ENCODE measurements at regions of chr6 and their contacts with region 1.

Region 1: DNA sequence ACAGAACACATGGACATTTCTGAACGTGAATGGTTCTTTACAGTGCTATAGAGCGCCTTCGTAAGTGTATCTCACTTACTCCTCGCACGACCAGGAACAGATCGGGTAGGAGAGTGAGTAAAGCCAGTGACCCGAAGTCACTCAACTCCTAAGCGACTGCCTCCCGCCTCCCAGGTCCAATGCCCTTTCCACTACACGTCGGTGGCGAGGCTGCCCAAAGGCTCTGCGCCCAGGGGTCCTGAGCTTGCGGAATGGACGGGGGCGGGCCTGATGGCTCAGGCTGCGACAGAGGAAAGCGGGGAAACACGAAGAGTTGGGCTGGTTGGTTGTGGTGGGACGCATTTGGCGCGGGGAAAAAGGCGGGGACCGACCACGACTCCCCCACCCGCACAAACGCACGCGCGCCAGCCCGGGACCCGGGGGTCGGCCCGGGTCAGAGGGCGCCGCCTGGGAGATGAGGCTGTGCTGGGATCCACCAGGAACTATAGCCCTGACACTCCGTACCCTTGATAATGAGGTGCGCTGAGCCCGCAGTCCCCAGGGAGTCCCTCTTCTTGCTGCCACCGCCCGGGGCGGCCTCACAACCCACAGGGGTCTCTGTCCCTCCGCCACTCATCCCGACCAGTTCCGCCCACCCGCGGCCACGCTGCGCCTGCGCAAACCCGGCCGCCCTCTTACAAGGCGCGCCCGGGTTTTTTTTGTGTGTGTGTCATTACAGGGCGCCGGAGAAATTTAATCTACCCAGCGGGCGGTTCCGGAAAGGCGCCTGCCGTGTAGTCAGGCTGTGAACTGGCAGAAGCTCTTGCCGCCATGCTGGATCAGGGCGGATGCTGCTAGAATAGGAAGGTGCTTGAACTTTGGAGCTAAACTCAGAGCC is at the start of gene BLOC1S5:
- DNase-seq: peak; percentile 97
- ATAC-seq: peak; percentile 90
- H3K4me3 ChIP-seq: peak within 1 kb of the TSS; percentile 78 to 96 (median 85)
- H3K4me3 Mint-ChIP-seq: peak within 1 kb of the TSS; percentile 98
- H3K27ac ChIP-seq: peak within 1 kb of the TSS; percentile 85 to 86
- H3K27ac Mint-ChIP-seq: peak within 1 kb of the TSS; percentile 94
- H3K4me1 ChIP-seq: peaks cover 7 to 15% of the 10 kb centered on the region in 2 donors
- H3K4me1 Mint-ChIP-seq: peaks cover 20% of the 10 kb centered on the region
- H3K27me3 ChIP-seq: no peaks in the 10 kb centered on the region
- H3K27me3 Mint-ChIP-seq: no peaks in the 10 kb centered on the region
- CTCF ChIP-seq: no peak
- total RNA-seq, gene BLOC1S5: 16.0 and 18.8 TPM in 2 replicates

Region 2: DNA sequence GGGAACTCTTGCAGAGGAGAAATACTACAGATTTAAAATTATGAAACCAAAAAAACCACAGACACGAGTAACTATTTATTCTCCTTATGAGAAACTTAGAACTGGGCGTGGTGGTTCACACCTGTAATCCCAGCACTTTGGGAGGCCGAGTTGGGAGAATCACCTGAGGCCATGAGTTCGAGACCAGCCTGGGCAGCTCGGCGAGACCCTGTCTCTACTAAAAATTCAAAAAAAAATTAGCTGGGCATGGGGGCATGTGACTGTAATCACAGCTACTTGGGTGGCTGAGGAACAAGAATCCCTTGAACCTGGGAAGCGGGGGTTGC is 787.8 kb before region 1 on chr6:
- CTCF ChIA-PET with region 1: interaction called, 9 read pairs
- POLR2A ChIA-PET with region 1: no interaction called
- intact Hi-C with region 1: loop called (anchors 1 kb)
- DNase-seq: no peak
- ATAC-seq: no peak
- H3K4me3 ChIP-seq: no peak overlapping the region
- H3K4me3 Mint-ChIP-seq: peak overlapping the region; percentile 64
- H3K27ac ChIP-seq: no peak overlapping the region
- H3K27ac Mint-ChIP-seq: peak overlapping the region; percentile 81
- H3K4me1 ChIP-seq: peaks cover 29 to 36% of the 10 kb centered on the region in 2 donors
- H3K4me1 Mint-ChIP-seq: peaks cover 28% of the 10 kb centered on the region
- H3K27me3 ChIP-seq: no peaks in the 10 kb centered on the region
- H3K27me3 Mint-ChIP-seq: no peaks in the 10 kb centered on the region
- CTCF ChIP-seq: peak; percentile 56

Region 3: GRCh38 chr6:7589949-7590917 is 473.8 kb before region 1 on chr6 and contains the start of gene SNRNP48:
- CTCF ChIA-PET with region 1: no interaction called
- POLR2A ChIA-PET with region 1: no interaction called
- intact Hi-C with region 1: loop called (anchors 1 kb)
- DNase-seq: peak; percentile 93
- ATAC-seq: peak; percentile 100
- H3K4me3 ChIP-seq: peak within 1 kb of the TSS; percentile 67 to 97 (median 87)
- H3K4me3 Mint-ChIP-seq: peak within 1 kb of the TSS; percentile 100
- H3K27ac ChIP-seq: peak within 1 kb of the TSS; percentile 23 to 62
- H3K27ac Mint-ChIP-seq: peak within 1 kb of the TSS; percentile 96
- H3K4me1 ChIP-seq: peaks cover 21 to 27% of the 10 kb centered on the region in 2 donors
- H3K4me1 Mint-ChIP-seq: peaks cover 35% of the 10 kb centered on the region
- H3K27me3 ChIP-seq: no peaks in the 10 kb centered on the region
- H3K27me3 Mint-ChIP-seq: no peaks in the 10 kb centered on the region
- CTCF ChIP-seq: no peak
- total RNA-seq, gene SNRNP48: 22.9 and 25.3 TPM in 2 replicates

Region 4: DNA sequence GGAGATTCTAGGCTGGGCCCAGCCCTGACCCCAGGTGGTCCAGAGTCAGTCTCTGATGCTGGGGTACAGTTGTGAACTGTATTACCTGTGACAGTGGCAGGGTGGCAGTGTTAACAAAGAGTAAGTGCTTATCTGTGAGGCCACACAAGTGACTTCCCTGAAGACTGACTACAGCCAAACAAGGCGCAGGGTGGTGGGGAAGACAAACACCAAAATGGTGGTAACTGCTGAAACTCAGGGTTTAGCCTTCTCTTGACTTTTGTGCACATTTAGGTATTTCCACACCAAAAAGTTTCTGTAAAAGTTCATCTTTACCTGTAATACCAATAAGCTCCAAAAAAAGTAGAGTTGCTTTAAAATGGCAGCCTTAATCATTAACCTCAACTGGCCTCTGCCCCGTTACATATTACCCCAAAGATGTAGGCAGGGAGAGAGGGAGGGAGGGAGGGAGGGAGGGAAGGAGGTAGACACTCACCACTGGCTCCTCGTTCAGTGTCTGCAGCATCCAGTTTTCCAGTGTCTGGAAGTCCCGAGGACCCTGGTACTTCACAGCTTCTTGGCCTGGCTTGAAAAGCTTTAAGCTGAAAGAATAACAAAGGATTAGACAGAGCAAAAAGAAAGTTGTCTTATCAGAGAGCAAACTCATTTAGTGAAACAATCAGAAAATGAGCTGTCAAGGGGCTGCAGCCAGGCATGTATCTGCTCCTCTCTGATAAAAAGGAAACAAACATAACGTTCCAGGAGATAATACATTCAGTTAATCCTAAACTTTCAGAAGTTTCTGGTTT is 164.7 kb before region 1 on chr6:
- CTCF ChIA-PET with region 1: no interaction called
- POLR2A ChIA-PET with region 1: no interaction called
- intact Hi-C with region 1: loop called (anchors 1 kb)
- DNase-seq: peak; percentile 40
- ATAC-seq: peak; percentile 39
- H3K4me3 ChIP-seq: no peak overlapping the region
- H3K4me3 Mint-ChIP-seq: no peak overlapping the region
- H3K27ac ChIP-seq: no peak overlapping the region
- H3K27ac Mint-ChIP-seq: peak overlapping the region; percentile 46
- H3K4me1 ChIP-seq: peaks cover 10 to 17% of the 10 kb centered on the region in 2 donors
- H3K4me1 Mint-ChIP-seq: peaks cover 33% of the 10 kb centered on the region
- H3K27me3 ChIP-seq: no peaks in the 10 kb centered on the region
- H3K27me3 Mint-ChIP-seq: no peaks in the 10 kb centered on the region
- CTCF ChIP-seq: no peak

Region 5: GRCh38 chr6:8074213-8074612 is 10.2 kb after region 1 on chr6:
- CTCF ChIA-PET with region 1: no interaction called
- POLR2A ChIA-PET with region 1: no interaction called
- intact Hi-C with region 1: no loop called
- DNase-seq: no peak
- ATAC-seq: no peak
- H3K4me3 ChIP-seq: no peak overlapping the region
- H3K4me3 Mint-ChIP-seq: no peak overlapping the region
- H3K27ac ChIP-seq: no peak overlapping the region
- H3K27ac Mint-ChIP-seq: no peak overlapping the region
- H3K4me1 ChIP-seq: peaks cover 3 to 5% of the 10 kb centered on the region in 2 donors
- H3K4me1 Mint-ChIP-seq: peaks cover 4% of the 10 kb centered on the region
- H3K27me3 ChIP-seq: no peaks in the 10 kb centered on the region
- H3K27me3 Mint-ChIP-seq: no peaks in the 10 kb centered on the region
- CTCF ChIP-seq: no peak

Region 6: DNA sequence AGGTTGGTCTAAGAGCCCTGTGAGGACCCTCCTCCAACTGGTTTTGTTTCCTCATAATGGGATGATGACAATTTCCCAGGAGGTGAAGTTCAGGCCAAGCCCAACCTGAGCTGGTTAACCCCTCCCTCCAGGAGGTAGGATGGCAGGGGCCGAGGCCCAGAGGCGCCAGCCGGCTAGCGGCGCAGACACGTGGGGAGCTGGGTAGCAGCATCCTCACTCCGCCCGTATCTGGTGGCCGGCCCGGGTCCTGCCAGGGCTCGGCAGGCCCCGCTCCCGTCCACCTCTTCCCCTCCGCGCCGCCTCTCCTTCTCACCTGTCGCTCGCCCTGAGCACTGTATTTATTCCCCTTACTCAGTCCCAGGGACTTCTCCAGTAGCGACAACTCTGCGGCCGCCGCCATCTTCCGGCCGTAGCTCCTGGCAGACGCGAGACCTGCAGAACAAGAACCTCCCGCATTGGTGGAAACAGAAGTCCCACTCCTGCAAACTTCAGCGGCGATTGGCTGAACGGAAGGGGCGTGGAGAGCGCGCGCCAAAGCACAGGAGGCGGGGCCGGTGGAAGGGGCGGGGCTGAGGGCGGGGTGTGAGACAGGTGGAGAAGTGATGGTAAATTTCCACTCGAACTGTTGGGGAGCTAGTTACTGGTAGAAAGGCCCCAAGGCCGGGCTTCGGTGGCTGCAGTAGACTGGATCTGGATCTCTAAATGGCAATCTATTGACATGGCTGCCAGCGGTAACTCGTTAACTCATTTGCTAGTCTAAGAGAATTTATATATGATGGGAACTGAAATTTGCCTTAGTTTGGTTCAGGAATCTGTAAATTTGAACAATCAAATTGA is 38.3 kb after region 1 on chr6 and contains the start of gene EEF1E1:
- CTCF ChIA-PET with region 1: interaction called, 8 read pairs
- POLR2A ChIA-PET with region 1: interaction called, 7 read pairs
- intact Hi-C with region 1: loop called (anchors 1 kb)
- DNase-seq: peak; percentile 95
- ATAC-seq: peak; percentile 98
- H3K4me3 ChIP-seq: peak within 1 kb of the TSS; percentile 61 to 89 (median 86)
- H3K4me3 Mint-ChIP-seq: peak within 1 kb of the TSS; percentile 96
- H3K27ac ChIP-seq: peak within 1 kb of the TSS; percentile 50 to 76
- H3K27ac Mint-ChIP-seq: peak within 1 kb of the TSS; percentile 97
- H3K4me1 ChIP-seq: peaks cover 12% of the 10 kb centered on the region in 2 donors
- H3K4me1 Mint-ChIP-seq: peaks cover 21% of the 10 kb centered on the region
- H3K27me3 ChIP-seq: peaks cover 0 to 6% (median 2%) of the 10 kb centered on the region in 4 experiments
- H3K27me3 Mint-ChIP-seq: peaks cover 22% of the 10 kb centered on the region
- CTCF ChIP-seq: no peak
- total RNA-seq, gene EEF1E1: 20.1 and 23.1 TPM in 2 replicates